ENCODE measurements at regions of chr6 and their contacts with region 1.

Region 1: GRCh38 chr6:111997078-111997852 is 56.6 kb upstream of the CCN6 start:
- DNase-seq: peak; percentile 80 to 84
- H3K4me3 ChIP-seq: no peak overlapping the region
- H3K4me1 ChIP-seq: peaks cover 3% of the 10 kb centered on the region; the same call in 1 of the 2 replicates
- H3K27me3 ChIP-seq: peaks cover 3% of the 10 kb centered on the region

Region 2: DNA sequence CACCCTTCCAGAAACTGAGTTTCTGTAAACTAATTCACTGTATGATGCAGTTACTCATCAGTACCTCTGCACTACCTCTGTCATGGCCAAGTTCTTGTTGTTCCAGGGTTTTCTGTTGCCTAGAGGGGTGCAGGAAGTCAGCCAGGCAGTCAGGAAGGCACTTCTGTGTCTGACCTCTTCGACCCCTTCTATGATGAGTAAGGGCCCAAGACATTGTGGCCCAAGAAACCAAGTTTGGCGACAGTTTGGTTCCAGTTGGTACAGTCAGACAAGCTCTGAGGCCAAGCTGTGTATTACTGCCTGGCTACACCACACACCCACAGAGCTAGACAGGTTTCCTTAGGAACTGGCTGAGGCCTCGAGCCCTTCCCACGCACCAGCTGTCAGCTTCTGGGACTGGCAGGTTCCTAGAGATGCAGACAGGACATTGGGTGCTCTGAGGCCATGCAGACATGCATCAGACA is 432.8 kb before region 1 on chr6:
- in situ Hi-C with region 1: no loop called
- DNase-seq: no peak
- H3K4me3 ChIP-seq: no peak overlapping the region
- H3K4me1 ChIP-seq: peaks cover 18% of the 10 kb centered on the region
- H3K27me3 ChIP-seq: no peaks in the 10 kb centered on the region

Region 3: DNA sequence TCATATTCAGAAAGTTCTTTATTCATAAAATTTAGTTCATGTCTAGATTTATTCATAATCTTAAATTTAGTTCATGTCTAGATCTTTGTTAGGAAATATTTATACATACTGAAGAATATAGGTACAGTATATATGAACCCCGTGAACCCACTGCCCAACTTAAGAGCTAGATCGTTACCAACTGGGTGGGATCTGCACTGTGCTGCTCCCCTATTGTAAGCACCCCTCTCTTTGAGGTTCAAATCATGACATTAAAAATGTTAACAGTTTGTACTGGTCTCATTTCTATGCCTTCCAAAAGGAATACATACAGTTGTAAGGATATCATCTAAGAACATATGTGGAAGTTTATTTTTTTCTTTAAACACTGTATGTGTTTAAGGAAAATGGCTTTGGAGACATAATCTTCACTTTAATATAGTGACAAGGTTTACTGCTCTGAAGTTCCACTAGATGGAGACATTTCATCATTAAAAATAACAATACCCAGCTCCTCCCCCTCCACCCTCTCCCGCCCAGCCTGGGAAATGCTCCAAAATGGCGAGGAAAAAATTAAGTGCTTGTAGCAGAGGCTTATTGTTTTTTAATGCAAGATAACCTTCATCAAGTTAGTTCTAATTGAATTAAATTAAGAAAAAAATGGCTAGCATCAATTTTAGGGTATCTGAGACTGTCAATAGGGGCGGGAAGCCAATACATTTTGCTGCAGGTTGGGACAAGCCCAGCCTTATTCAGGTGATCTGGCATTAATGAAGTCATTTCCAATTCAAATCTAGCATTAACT is 287.5 kb before region 1 on chr6:
- in situ Hi-C with region 1: loop called (anchors 5 kb)
- DNase-seq: peak; percentile 70 to 86
- H3K4me3 ChIP-seq: no peak overlapping the region
- H3K4me1 ChIP-seq: peaks cover 15% of the 10 kb centered on the region
- H3K27me3 ChIP-seq: no peaks in the 10 kb centered on the region

Region 4: DNA sequence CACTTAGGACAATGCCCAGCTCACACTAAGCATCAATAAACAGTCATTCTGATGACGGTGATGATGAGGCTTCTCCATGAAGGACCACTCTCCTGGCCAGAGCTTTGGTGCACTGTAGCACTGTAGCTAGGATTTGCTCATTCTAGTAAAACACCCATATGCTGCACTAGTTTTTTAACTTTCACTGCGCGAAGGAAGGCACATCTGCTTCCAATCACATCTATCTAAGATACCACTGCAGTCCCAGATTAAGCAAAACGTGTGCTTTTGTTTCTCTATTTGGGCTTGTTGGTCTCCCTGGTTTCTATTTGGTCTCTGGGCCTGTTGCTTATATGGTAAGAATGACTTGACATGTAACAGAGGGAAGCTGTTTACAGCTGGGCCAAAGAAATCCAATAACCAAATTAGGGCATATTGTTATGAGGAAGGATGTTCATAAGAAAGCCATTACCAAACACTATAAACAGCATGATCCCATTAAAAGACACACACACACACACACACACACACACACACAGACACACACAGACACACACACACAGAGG is 152.5 kb after region 1 on chr6:
- in situ Hi-C with region 1: no loop called
- DNase-seq: no peak
- H3K4me3 ChIP-seq: no peak overlapping the region
- H3K4me1 ChIP-seq: no peaks in the 10 kb centered on the region
- H3K27me3 ChIP-seq: no peaks in the 10 kb centered on the region